Activated CD8-positive, alpha-beta T cell treated with anti-CD3 and anti-CD28 coated beads, Interleukin-2, amount 10 ng/mL, durations not matched to agents 7 days and 5 days (primary cell): ENCODE measurements at regions of chr19 and their contacts with region 1.

Region 1: GRCh38 chr19:19663256-19664038 is at the start of gene ATP13A1:
- DNase-seq: peak; percentile 96
- ATAC-seq: peak; percentile 84
- H3K4me3 Mint-ChIP-seq: peak within 1 kb of the TSS; percentile 93
- H3K27ac Mint-ChIP-seq: peak within 1 kb of the TSS; percentile 98
- H3K4me1 Mint-ChIP-seq: peaks cover 33% of the 10 kb centered on the region
- H3K27me3 Mint-ChIP-seq: no peaks in the 10 kb centered on the region
- total RNA-seq, gene ATP13A1: 78.6 to 78.8 TPM

Region 2: DNA sequence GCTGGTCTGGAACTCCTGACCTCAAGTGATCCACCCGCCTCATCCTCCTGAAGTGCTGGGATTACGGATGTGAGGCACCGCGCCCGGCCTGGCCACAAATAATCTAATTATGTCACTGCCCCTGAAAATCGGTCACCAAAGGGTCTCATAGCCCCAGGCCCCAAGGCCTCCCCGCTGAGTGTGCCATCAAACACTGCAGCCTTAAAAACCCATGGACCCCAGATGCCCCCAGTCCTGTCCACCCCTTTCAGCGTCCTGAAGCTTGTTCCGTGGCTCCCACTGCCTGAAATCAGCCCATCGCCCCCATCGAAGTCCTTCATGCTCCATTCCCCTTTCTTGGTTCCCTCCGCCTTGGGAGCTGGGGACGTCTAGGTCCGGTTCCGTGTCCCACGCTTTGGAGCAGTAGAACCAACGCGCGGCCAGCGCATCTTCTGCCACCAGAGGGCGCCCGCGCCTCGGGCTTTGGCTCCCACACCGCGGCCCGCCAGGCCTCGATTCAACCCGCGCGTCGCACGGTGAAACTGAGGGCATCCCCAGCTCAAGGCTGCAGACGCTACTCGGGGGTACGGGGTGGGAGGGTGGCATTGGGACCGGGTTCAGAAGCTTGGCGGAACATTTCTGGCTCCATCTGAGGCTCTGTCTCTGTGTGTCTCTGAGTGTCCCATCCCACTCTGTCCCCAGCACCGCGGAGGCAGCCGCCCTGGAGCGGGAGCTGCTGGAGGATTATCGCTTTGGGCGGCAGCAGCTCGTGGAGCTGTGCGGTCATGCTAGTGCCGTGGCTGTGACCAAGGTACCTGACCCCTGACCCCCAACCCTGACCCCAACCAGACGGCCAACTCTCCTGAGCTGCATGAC is 131.3 kb before region 1 on chr19:
- CTCF ChIA-PET with region 1: interaction called, 17 read pairs
- POLR2A ChIA-PET with region 1: interaction called, 4 read pairs
- DNase-seq: peak; percentile 88
- ATAC-seq: peak; percentile 87
- H3K4me3 Mint-ChIP-seq: no peak overlapping the region
- H3K27ac Mint-ChIP-seq: no peak overlapping the region
- H3K4me1 Mint-ChIP-seq: peaks cover 10% of the 10 kb centered on the region
- H3K27me3 Mint-ChIP-seq: peaks cover 3% of the 10 kb centered on the region

Region 3: DNA sequence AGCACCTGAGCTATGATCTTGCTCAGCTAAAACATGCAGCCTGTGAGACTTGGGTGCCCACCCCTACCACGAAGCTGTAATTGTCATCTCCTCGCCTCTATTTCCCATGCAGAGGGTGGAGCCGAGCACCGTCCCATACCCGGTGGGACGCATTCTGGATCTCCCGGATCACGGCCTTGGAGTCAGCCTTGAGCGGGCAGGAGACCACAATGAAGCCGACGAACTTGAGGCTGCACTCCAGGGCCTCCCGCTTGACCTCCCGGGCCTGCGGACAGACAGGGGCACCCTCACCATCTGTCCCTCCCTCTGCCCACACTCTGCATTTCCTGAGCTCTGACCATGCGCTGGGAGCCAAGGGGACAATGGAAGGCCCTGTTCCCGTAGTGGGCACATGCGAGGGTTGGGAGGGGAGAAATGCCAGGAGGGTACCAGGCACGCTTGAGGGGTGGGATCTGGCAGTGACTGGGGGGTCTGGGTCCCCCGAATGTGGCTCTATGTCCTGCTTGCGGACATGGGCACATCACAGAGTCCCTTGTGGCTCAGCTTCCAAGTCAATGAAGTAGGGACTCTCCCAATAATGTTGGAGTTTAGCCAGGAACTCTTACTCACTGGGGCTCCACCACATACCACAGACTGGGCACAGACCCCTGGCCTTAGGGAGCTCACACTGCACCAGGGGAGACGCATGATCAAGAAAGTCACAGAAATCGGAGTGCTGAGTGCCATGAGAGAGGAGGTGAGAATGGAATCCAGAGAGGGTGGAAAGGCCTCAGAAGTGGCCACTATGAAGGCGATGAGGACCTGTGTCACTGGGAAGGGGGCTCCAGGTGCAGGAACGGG is 10.8 kb before region 1 on chr19:
- CTCF ChIA-PET with region 1: no interaction called
- POLR2A ChIA-PET with region 1: interaction called, 19 read pairs
- DNase-seq: no peak
- ATAC-seq: no peak
- H3K4me3 Mint-ChIP-seq: no peak overlapping the region
- H3K27ac Mint-ChIP-seq: peak overlapping the region; percentile 21
- H3K4me1 Mint-ChIP-seq: no peaks in the 10 kb centered on the region
- H3K27me3 Mint-ChIP-seq: no peaks in the 10 kb centered on the region

Region 4: GRCh38 chr19:19821366-19821951 is 158.0 kb after region 1 on chr19 and contains the start of gene ZNF506:
- CTCF ChIA-PET with region 1: interaction called, 7 read pairs
- POLR2A ChIA-PET with region 1: interaction called, 41 read pairs
- DNase-seq: peak; percentile 98
- ATAC-seq: peak; percentile 98
- H3K4me3 Mint-ChIP-seq: peak within 1 kb of the TSS; percentile 100
- H3K27ac Mint-ChIP-seq: peak within 1 kb of the TSS; percentile 100
- H3K4me1 Mint-ChIP-seq: peaks cover 34% of the 10 kb centered on the region
- H3K27me3 Mint-ChIP-seq: no peaks in the 10 kb centered on the region
- total RNA-seq, gene ZNF506: 22.4 to 25.1 TPM

Region 5: GRCh38 chr19:19900729-19901444 is 237.4 kb after region 1 on chr19 and contains the start of gene ZNF93:
- CTCF ChIA-PET with region 1: no interaction called
- POLR2A ChIA-PET with region 1: interaction called, 28 read pairs
- DNase-seq: peak; percentile 96
- ATAC-seq: peak; percentile 96
- H3K4me3 Mint-ChIP-seq: peak within 1 kb of the TSS; percentile 97
- H3K27ac Mint-ChIP-seq: peak within 1 kb of the TSS; percentile 98
- H3K4me1 Mint-ChIP-seq: peaks cover 40% of the 10 kb centered on the region
- H3K27me3 Mint-ChIP-seq: no peaks in the 10 kb centered on the region
- total RNA-seq, gene ZNF93: 15.8 to 17.9 TPM